OCI-LY7 (cell line): ENCODE measurements at regions of chr3 and their contacts with region 1.

Region 1: GRCh38 chr3:172476347-172476746 is 28.1 kb upstream of the GHSR start:
- DNase-seq: no peak
- H3K4me3 ChIP-seq: no peak overlapping the region
- H3K27ac ChIP-seq: no peak overlapping the region
- H3K4me1 ChIP-seq: no peaks in the 10 kb centered on the region
- CTCF ChIP-seq: no peak

Region 2: DNA sequence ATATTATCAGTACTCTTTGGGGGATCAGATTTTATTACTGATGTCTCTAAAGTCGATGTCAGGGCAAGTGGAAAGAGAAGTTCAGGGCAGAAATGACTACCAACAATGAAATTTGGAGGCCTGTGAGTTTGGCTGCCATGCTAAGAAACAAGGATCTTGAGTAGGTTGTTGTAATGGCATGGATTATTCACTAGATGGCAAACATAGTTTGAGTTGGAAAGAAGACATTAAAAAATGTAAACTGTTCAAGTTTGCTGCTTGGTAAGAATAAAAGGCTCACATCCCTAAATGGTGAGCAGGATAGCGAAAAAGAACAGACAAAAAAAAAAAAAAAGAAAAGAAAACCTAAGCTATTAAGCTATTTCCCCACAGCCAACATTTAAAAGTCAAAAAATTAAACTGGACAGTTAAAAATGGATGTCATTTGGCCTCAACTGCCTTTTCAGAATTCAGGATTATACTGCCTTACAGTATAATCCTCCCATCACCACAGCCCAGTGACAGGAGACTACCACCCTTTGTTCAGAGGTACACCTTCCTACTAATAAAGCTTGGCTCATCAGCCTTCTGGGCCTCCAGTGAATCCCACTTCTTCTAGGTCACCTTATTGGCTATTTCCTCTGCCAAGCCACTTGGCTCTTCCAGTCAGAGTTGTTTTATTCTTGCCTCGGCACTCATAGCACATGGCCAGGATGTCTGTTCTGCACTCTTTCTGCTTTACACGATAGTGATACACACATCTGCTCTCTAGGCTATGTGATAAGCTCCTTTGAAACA is 829.8 kb before region 1 on chr3:
- CTCF ChIA-PET with region 1: no interaction called
- POLR2A ChIA-PET with region 1: no interaction called
- intact Hi-C with region 1: loop called (anchors 5 kb)
- DNase-seq: peak; percentile 18
- H3K4me3 ChIP-seq: no peak overlapping the region
- H3K27ac ChIP-seq: no peak overlapping the region
- H3K4me1 ChIP-seq: no peaks in the 10 kb centered on the region
- CTCF ChIP-seq: peak; percentile 70

Region 3: GRCh38 chr3:171703756-171704401 is 772.5 kb before region 1 on chr3:
- CTCF ChIA-PET with region 1: no interaction called
- POLR2A ChIA-PET with region 1: no interaction called
- intact Hi-C with region 1: loop called (anchors 5 kb)
- DNase-seq: peak; percentile 43
- H3K4me3 ChIP-seq: no peak overlapping the region
- H3K27ac ChIP-seq: no peak overlapping the region
- H3K4me1 ChIP-seq: no peaks in the 10 kb centered on the region
- CTCF ChIP-seq: peak; percentile 82